CD4-positive, alpha-beta memory T cell (primary cell): ENCODE measurements at regions of chr11 and their contacts with region 1.

Region 1: DNA sequence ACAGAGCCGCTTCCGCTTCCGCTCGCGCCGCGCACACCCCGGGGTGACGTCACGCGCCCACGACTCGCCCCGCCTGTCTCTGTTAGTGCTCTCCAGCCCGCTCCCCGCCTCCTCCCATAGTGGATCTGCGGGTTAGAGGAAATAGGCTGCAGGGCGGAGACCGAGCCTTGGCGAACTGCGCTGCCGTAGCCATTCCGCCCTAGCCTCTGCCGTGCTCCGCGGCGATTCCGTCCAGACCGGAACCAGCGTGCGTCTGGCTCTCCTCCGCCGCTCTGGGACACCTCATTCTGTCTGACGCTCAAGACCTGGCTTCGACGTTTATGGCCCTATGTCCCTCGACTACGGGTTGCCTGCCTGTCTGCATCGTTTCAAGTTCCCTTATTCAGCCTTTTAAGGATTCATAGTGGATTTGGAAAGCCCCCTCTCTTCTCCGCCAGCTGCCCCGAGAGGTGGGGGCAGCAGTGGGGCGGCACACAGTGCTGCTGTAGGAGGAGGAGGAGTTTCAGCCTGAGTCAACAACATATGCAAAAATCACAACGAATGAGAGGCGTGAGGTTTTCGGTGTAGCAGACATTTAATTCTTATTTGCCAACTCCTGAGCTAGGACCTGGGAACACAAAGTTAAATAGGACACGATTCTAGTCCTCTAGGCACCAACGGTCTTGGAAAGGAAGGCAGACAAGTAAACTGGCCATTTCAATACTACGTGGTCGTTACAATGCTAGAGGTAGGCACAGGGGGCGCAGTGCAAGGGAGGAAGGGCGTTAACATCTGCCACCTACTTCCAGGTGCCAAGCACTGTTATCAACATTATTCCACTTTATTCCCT is at the start of gene TAF10:
- DNase-seq: peak; percentile 93 to 97 (median 95)
- H3K4me3 ChIP-seq: peak within 1 kb of the TSS; percentile 66 to 88
- H3K4me3 Mint-ChIP-seq: peak within 1 kb of the TSS; percentile 87 to 94 (median 91)
- H3K27ac ChIP-seq: peak within 1 kb of the TSS; percentile 87
- H3K27ac Mint-ChIP-seq: peak within 1 kb of the TSS in 6 of 7 donors; percentile 95 to 97 (median 97)
- H3K4me1 ChIP-seq: peaks cover 51% of the 10 kb centered on the region
- H3K4me1 Mint-ChIP-seq: peaks cover 6 to 36% (median 28%) of the 10 kb centered on the region in 4 donors
- H3K27me3 ChIP-seq: no peaks in the 10 kb centered on the region
- H3K27me3 Mint-ChIP-seq: no peaks in the 10 kb centered on the region
- total RNA-seq, gene TAF10: 116 to 120 TPM

Region 2: DNA sequence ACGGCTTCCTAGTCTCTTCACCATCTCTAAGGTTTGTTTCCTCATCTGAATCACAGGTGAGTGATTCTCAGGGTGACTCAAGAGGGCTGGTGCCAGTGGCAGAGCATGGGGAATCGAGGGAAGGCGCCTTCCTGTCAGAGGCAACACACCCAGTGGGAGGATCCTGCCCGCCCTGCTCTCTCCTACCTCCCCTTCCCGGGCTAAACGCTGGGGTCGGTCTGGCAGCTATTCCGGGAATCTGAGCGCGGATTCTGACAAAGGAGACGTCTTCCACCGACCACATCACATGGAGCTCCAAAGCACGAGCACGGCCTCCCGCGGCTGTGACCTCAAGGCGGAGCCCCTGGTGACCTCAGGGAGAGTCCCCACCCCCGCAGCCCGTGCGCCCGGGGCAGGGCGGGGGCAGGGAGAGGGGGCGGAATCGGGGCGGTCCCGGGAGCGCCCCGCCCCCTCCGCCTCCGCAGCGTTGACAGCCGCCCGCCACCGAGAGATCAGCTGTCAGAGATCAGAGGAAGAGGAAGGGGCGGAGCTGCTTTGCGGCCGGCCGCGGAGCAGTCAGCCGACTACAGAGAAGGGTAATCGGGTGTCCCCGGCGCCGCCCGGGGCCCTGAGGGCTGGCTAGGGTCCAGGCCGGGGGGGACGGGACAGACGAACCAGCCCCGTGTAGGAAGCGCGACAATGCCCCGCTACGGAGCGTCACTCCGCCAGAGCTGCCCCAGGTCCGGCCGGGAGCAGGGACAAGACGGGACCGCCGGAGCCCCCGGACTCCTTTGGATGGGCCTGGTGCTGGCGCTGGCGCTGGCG is 222.3 kb before region 1 on chr11 and contains the start of gene SMPD1:
- CTCF ChIA-PET with region 1: interaction called, 3 read pairs
- POLR2A ChIA-PET with region 1: interaction called, 7 read pairs
- intact Hi-C with region 1: loop called (anchors 2 kb)
- DNase-seq: peak; percentile 91 to 96 (median 92)
- H3K4me3 ChIP-seq: peak within 1 kb of the TSS; percentile 79 to 97
- H3K4me3 Mint-ChIP-seq: peak within 1 kb of the TSS; percentile 93 to 98 (median 95)
- H3K27ac ChIP-seq: peak within 1 kb of the TSS; percentile 83
- H3K27ac Mint-ChIP-seq: peak within 1 kb of the TSS; percentile 98 to 100 (median 99)
- H3K4me1 ChIP-seq: peaks cover 50% of the 10 kb centered on the region
- H3K4me1 Mint-ChIP-seq: peaks cover 24 to 61% (median 44%) of the 10 kb centered on the region in 4 donors
- H3K27me3 ChIP-seq: no peaks in the 10 kb centered on the region
- H3K27me3 Mint-ChIP-seq: no peaks in the 10 kb centered on the region
- total RNA-seq, gene SMPD1: 39.3 to 43.6 TPM

Region 3: GRCh38 chr11:6481012-6481923 is 131.2 kb before region 1 on chr11 and contains the starts of genes ARFIP2 and TIMM10B:
- CTCF ChIA-PET with region 1: interaction called, 4 read pairs
- POLR2A ChIA-PET with region 1: interaction called, 16 read pairs
- intact Hi-C with region 1: no loop called
- DNase-seq: peak; percentile 93 to 98 (median 95)
- H3K4me3 ChIP-seq: peak within 1 kb of the TSS; percentile 83 to 97
- H3K4me3 Mint-ChIP-seq: peak within 1 kb of the TSS; percentile 93 to 98 (median 96)
- H3K27ac ChIP-seq: peak within 1 kb of the TSS; percentile 90
- H3K27ac Mint-ChIP-seq: peak within 1 kb of the TSS; percentile 95 to 99 (median 98)
- H3K4me1 ChIP-seq: peaks cover 46% of the 10 kb centered on the region
- H3K4me1 Mint-ChIP-seq: peaks cover 26 to 44% (median 36%) of the 10 kb centered on the region in 4 donors
- H3K27me3 ChIP-seq: no peaks in the 10 kb centered on the region
- H3K27me3 Mint-ChIP-seq: no peaks in the 10 kb centered on the region
- total RNA-seq, gene ARFIP2: 53.9 to 56.9 TPM
- total RNA-seq, gene TIMM10B: 54.7 to 60.3 TPM

Region 4: DNA sequence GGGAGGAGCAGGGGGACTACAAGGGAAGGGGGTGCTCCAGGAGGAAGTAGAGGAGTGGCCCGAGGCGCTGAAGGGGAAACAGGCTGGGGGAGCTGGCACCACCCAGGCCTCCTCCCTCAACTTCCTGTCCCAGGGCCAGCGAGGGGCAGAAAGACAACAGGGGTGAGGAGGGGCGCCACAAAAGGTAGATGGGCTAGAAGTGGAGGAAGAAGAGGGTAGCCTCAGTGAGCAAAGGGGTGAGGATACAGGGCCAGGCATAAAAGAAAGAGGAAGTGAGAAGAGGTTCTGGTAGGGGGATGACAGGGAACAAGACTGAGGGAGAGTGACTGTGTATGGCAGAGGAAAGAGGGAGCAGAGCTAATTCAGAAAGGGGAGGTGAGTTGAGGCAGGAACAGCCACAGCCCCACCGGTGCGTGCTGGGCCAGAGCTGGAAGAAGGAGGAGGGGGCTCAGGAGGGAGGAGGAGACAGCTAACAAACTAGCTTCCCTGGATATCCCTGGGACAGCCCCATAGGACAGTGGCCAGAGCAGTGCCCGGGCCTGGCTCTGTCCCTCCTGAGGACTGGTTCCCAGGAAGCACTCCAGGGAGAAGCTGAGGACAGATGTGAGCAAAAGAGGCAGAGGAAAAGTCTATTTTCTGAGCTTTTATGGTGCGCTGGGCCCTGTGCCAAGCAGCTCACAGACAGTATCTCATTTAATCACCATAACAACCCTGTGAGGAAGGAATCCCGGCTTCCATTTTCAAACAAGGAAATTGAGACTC is 34.7 kb after region 1 on chr11:
- CTCF ChIA-PET with region 1: interaction called, 8 read pairs
- POLR2A ChIA-PET with region 1: interaction called, 37 read pairs
- intact Hi-C with region 1: no loop called
- DNase-seq: peak in 3 of 5 donors; percentile 22 to 31 (median 22)
- H3K4me3 ChIP-seq: peak overlapping the region; percentile 8 to 26
- H3K4me3 Mint-ChIP-seq: no peak overlapping the region
- H3K27ac ChIP-seq: peak overlapping the region; percentile 54
- H3K27ac Mint-ChIP-seq: no peak overlapping the region
- H3K4me1 ChIP-seq: peaks cover 44% of the 10 kb centered on the region
- H3K4me1 Mint-ChIP-seq: peaks cover 0 to 12% (median 0%) of the 10 kb centered on the region in 4 donors
- H3K27me3 ChIP-seq: no peaks in the 10 kb centered on the region
- H3K27me3 Mint-ChIP-seq: no peaks in the 10 kb centered on the region

Region 5: DNA sequence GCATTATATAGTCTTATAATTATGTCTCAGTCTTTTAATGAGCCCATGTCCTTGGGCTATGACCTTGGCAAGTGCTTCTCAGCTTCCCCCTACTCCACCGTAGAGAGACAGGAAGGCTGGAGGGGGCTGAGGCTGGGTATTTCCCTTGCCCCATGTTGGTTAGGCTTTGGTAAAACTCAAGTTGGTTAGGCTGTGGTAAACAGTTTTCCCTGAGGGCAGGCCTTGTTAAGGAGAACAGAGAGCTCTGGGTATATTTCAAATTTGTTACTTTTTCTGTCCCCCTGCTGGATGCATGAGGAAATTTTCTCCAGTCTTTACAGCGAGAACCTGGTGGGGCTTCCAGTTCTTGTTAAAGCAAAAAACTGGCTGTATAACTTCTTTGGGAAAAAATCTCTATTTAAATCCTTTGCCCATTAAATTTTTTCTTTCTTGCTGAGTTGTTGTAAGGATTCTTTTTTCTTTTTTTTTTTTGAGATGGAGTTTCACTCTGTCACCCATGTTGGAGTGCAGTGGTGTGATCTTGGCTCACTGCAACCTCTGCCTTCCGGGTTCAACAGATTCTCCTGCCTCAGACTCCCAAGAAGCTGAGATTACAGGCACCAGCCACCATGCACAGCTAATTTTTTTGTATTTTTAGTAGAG is 55.4 kb after region 1 on chr11:
- CTCF ChIA-PET with region 1: interaction called, 40 read pairs
- POLR2A ChIA-PET with region 1: interaction called, 49 read pairs
- intact Hi-C with region 1: no loop called
- DNase-seq: peak; percentile 48 to 78 (median 54)
- H3K4me3 ChIP-seq: no peak overlapping the region
- H3K4me3 Mint-ChIP-seq: peak overlapping the region in 7 of 8 donors; percentile 5 to 35 (median 16)
- H3K27ac ChIP-seq: no peak overlapping the region
- H3K27ac Mint-ChIP-seq: peak overlapping the region; percentile 11 to 88 (median 74)
- H3K4me1 ChIP-seq: peaks cover 59% of the 10 kb centered on the region
- H3K4me1 Mint-ChIP-seq: peaks cover 45 to 87% (median 54%) of the 10 kb centered on the region in 4 donors
- H3K27me3 ChIP-seq: no peaks in the 10 kb centered on the region
- H3K27me3 Mint-ChIP-seq: no peaks in the 10 kb centered on the region

Region 6: DNA sequence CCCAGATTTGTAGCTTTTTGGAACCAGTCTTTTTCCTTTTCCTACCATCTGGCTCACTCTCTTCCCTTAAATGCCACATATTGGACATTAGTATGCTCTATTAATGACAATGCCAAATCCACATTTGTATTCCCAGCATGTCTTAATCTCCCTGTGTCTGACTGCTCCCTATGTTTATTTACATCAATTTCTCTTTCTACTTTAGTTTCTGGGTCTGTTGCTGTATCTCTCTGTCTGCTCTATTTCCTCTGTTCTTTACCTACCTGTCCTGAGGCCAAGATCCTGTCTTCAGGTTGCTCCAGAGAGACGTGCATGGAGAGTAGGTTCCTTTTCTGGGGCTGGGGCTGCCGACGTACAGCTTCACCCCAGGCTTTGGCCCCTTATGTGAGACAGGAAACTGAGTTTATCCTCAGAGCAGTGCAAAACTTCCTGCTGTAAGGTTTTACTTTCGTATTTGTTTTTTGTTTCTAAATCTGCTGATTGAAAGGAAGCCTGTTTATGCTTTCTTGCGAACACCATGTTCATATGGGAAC is 133.7 kb after region 1 on chr11:
- CTCF ChIA-PET with region 1: interaction called, 20 read pairs
- POLR2A ChIA-PET with region 1: interaction called, 23 read pairs
- intact Hi-C with region 1: loop called (anchors 2 kb)
- DNase-seq: peak; percentile 56 to 64 (median 61)
- H3K4me3 ChIP-seq: peak overlapping the region; percentile 60 to 75
- H3K4me3 Mint-ChIP-seq: no peak overlapping the region
- H3K27ac ChIP-seq: peak overlapping the region; percentile 79
- H3K27ac Mint-ChIP-seq: no peak overlapping the region
- H3K4me1 ChIP-seq: peaks cover 49% of the 10 kb centered on the region
- H3K4me1 Mint-ChIP-seq: peaks cover 31 to 39% (median 34%) of the 10 kb centered on the region in 4 donors
- H3K27me3 ChIP-seq: no peaks in the 10 kb centered on the region
- H3K27me3 Mint-ChIP-seq: no peaks in the 10 kb centered on the region